PC-9 (cell line): ENCODE measurements at regions of chr2 and their contacts with region 1.

Region 1: DNA sequence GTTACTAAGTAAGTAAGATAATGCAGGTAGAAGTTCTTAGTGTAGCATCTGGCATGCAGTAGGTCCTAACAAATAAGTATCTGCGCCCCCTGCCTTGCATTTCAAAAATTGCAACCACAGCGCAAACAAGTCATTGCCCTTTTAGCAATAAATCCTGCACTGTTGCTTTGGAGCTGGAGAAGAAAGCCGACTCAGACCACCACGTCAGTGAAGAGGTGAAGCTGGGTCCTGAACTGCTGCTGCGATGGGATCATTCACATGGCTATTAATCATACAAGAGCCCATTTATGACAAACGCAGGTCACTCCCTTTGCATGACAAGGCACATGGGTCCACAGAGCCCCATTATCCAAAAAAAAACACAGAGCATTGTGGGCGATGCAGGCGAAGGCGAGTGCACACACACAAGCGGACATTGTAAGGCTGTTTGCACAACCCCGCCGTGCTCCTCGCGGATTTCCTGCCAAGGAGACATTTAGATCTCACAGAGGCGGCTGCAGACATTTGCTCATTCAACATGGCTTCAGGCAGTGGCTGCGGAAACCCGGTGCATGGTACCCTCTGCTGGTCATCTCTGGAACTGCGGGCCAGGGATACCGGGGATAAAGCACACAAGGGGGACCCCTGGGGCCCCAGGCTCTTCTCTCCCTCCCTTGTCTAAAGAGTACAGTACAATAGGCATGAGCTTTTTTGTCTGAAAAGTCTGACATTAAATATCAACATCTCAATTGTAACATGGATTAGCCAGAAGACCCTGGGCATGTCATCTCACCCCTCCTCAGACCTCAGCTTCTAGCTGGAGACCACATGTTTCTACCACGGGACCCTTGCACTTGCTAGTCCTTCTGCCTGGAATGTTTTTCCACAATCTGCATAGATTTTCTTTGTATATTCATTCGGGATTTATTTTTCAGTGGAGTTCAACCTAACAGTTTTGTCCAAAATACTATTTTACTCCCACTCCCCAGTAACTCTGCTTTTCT is 56.7 kb downstream of the CYRIA start:
- DNase-seq: peak; percentile 52 to 77
- H3K4me3 ChIP-seq: no peak overlapping the region; the same call in 1 of the 2 replicates
- H3K27ac ChIP-seq: no peak overlapping the region
- H3K4me1 ChIP-seq: peaks cover 4% of the 10 kb centered on the region; the same call in 1 of the 2 replicates
- H3K27me3 ChIP-seq: no peaks in the 10 kb centered on the region
- CTCF ChIP-seq: peak; percentile 93

Region 2: DNA sequence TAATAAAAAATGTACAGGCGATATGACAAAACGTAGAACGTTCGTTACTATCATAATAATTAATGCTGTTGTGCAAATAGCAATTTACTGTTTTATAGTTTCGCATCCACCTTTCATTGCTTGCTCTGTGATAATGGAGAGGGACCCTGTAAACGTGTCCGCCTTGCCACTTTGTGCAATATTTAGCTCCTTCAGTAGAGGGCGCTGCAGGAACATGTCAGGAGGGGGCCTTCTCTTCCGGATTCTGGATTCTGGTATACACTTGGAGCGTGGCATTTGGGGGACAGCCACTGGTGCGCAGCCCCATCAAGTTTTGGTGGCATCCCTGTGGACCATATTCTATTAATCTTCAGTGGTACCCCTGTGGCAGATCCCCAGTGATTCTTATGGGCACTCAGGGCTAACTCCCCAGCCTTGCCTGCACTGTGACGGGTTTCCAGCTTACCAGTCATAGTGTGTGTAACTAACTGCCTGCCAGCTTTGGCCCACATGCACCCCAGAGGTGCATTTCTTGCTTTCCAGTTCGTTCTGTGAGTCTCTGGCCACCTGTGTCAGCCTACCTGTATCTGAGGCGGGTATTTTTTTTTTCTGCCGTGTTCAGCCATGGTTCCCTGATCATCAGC is 83.6 kb before region 1 on chr2:
- CTCF ChIA-PET with region 1: no interaction called
- POLR2A ChIA-PET with region 1: no interaction called
- intact Hi-C with region 1: loop called (anchors 1 kb)
- DNase-seq: peak in 1 of 2 experiments; percentile 18
- H3K4me3 ChIP-seq: no peak overlapping the region
- H3K27ac ChIP-seq: no peak overlapping the region
- H3K4me1 ChIP-seq: no peaks in the 10 kb centered on the region
- H3K27me3 ChIP-seq: peaks cover 55% of the 10 kb centered on the region
- CTCF ChIP-seq: peak; percentile 73

Region 3: GRCh38 chr2:16553226-16553625 is 55.7 kb before region 1 on chr2:
- CTCF ChIA-PET with region 1: no interaction called
- POLR2A ChIA-PET with region 1: no interaction called
- intact Hi-C with region 1: loop called (anchors 1 kb)
- DNase-seq: peak; percentile 8 to 41
- H3K4me3 ChIP-seq: no peak overlapping the region
- H3K27ac ChIP-seq: no peak overlapping the region
- H3K4me1 ChIP-seq: no peaks in the 10 kb centered on the region
- H3K27me3 ChIP-seq: no peaks in the 10 kb centered on the region
- CTCF ChIP-seq: peak; percentile 81

Region 4: GRCh38 chr2:16682431-16683118 is 73.6 kb after region 1 on chr2:
- CTCF ChIA-PET with region 1: no interaction called
- POLR2A ChIA-PET with region 1: no interaction called
- intact Hi-C with region 1: no loop called
- DNase-seq: no peak
- H3K4me3 ChIP-seq: no peak overlapping the region
- H3K27ac ChIP-seq: no peak overlapping the region
- H3K4me1 ChIP-seq: no peaks in the 10 kb centered on the region
- H3K27me3 ChIP-seq: no peaks in the 10 kb centered on the region
- CTCF ChIP-seq: no peak

Region 5: DNA sequence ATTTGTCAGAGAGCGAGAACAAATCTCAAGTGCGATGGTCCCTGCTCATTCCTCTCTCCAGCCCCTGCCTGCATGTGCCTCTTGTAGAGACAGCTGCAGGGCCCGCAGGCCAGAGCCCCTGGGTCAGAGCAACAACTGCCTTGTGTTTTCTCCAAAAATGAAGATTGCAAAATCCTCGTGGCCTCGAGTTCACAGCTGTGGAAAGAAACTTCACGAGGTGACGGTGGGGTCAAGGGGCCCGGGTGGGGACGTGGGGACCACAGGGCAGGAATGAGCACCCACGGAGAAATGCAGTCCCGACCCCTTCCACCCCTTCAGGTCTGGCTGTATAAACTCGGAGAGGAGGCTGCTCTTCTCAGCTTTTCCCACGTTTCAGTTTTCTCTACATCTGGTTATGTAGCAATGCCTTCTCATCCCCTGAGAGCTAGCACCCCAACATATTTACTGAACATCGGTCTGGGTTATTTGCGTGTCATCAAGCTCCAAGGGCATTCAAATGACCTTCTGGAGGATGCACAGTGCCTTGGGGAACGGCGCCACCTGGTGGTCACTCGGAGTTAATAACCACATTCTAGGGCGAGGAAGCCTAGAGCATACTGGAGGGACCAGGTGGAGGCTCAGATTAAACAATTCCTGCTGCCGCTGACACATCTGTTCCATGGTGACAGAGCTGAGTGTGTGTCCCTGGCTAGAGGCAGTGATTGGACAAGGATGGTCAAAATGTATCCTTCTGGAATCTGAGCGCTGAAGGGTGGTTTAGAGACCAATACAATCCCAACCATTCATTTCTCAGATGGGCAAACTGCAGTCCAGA is 148.1 kb after region 1 on chr2:
- CTCF ChIA-PET with region 1: interaction called, 11 read pairs
- POLR2A ChIA-PET with region 1: interaction called, 9 read pairs
- intact Hi-C with region 1: loop called (anchors 1 kb)
- DNase-seq: peak; percentile 49 to 63
- H3K4me3 ChIP-seq: no peak overlapping the region
- H3K27ac ChIP-seq: no peak overlapping the region
- H3K4me1 ChIP-seq: no peaks in the 10 kb centered on the region
- H3K27me3 ChIP-seq: no peaks in the 10 kb centered on the region
- CTCF ChIP-seq: peak; percentile 97

Region 6: GRCh38 chr2:16911746-16912145 is 302.8 kb after region 1 on chr2:
- CTCF ChIA-PET with region 1: no interaction called
- POLR2A ChIA-PET with region 1: no interaction called
- intact Hi-C with region 1: loop called (anchors 10 kb)
- DNase-seq: no peak
- H3K4me3 ChIP-seq: no peak overlapping the region
- H3K27ac ChIP-seq: no peak overlapping the region
- H3K4me1 ChIP-seq: peaks cover 46% of the 10 kb centered on the region
- H3K27me3 ChIP-seq: no peaks in the 10 kb centered on the region
- CTCF ChIP-seq: no peak

Region 7: DNA sequence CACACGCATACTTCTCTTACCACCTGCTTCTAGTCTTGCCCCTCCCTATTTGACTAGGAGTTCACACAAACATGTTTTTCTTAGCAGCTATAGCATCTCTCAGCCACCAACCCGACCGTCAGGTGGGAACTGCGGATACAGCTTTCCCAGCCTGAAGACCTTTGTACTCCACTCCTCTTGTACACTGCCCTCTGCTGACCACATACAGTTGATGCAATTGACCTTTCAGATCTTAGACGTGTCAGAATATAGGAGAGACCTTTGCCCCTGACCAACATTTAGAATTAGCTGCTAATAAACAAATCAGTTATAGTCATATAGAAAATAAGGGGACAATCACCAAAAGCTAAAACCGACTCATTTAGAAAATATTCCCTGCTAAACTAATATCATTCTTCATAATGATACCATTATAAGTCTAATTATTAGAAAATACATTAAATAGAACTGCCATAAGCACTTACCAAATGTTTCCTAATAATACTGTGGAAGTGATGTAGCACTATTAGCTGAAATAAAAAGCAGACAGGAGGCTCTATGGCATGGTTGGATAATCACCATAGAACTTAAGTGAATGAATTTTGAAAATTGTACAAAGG is 700.9 kb after region 1 on chr2:
- CTCF ChIA-PET with region 1: no interaction called
- POLR2A ChIA-PET with region 1: no interaction called
- intact Hi-C with region 1: loop called (anchors 1 kb)
- DNase-seq: peak; percentile 31 to 65
- H3K4me3 ChIP-seq: no peak overlapping the region
- H3K27ac ChIP-seq: no peak overlapping the region
- H3K4me1 ChIP-seq: peaks cover 35% of the 10 kb centered on the region
- H3K27me3 ChIP-seq: no peaks in the 10 kb centered on the region
- CTCF ChIP-seq: peak; percentile 90